Activated naive CD8-positive, alpha-beta T cell treated with anti-CD3 and anti-CD28 coated beads, Interleukin-2, amount 10 ng/mL, durations not matched to agents 7 days and 5 days (primary cell): ENCODE measurements at regions of chr11 and their contacts with region 1.

Region 1: GRCh38 chr11:128323381-128323780 is 264.0 kb downstream of the ETS1 start:
- DNase-seq: no peak
- ATAC-seq: peak; percentile 17
- H3K4me3 Mint-ChIP-seq: peak overlapping the region; percentile 84
- H3K27ac Mint-ChIP-seq: peak overlapping the region; percentile 98
- H3K4me1 Mint-ChIP-seq: peaks cover 79% of the 10 kb centered on the region
- H3K27me3 Mint-ChIP-seq: no peaks in the 10 kb centered on the region

Region 2: DNA sequence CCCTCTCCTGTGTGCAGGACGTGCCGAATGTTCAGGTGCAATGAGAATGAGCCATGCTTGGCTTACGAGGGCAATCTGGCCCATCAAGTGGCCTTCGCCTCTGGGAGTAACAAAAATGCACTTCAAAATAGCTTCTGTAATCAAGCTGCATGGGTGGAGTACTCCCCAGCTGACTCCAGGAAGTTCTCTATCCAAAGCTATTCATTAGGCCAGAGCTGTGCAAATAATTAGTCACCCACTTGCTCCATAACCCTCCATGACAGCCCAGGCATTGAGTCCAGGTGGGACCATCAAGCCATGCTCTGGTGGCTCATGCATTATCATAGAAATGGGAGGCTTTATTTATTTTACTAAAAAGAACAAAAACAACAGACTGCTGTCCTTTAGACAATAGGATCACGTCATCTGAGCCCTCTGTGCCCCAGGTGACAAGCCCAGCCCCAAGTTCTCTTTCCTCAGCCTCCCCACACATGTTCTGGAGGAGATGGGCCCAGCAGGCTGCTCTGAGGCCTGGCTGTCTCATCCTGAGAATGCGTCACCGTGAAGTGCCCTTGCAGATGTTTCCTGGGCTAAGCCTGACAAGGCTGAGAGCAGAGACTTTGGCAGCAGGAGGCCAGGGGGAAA is 19.2 kb after region 1 on chr11:
- POLR2A ChIA-PET with region 1: interaction called, 18 read pairs
- DNase-seq: peak; percentile 44
- ATAC-seq: peak; percentile 48
- H3K4me3 Mint-ChIP-seq: peak overlapping the region; percentile 87
- H3K27ac Mint-ChIP-seq: peak overlapping the region; percentile 97
- H3K4me1 Mint-ChIP-seq: peaks cover 43% of the 10 kb centered on the region
- H3K27me3 Mint-ChIP-seq: no peaks in the 10 kb centered on the region

Region 3: DNA sequence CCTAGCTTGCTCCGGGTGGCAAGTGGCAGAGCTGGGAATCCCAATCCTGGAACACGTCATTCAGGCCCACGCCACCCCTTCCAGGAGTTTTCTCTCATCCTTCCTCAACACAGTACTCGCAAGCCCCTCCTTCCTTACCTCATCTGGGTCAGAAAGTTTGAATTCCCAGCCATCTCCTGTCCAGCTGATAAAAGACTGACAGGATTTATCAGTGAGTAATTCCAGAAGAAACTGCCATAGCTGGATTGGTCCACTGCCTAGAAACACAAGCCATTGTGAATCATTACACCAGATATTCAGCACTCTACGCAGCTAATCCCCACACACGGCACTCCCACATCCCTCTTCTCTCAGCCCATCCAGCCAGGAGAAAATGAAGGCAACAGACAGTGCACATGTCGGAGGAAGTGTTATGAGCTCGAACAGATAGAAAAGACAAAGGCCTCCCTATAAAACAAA is 140.0 kb after region 1 on chr11:
- POLR2A ChIA-PET with region 1: interaction called, 18 read pairs
- DNase-seq: no peak
- ATAC-seq: no peak
- H3K4me3 Mint-ChIP-seq: peak overlapping the region; percentile 76
- H3K27ac Mint-ChIP-seq: peak overlapping the region; percentile 88
- H3K4me1 Mint-ChIP-seq: peaks cover 74% of the 10 kb centered on the region
- H3K27me3 Mint-ChIP-seq: no peaks in the 10 kb centered on the region

Region 4: DNA sequence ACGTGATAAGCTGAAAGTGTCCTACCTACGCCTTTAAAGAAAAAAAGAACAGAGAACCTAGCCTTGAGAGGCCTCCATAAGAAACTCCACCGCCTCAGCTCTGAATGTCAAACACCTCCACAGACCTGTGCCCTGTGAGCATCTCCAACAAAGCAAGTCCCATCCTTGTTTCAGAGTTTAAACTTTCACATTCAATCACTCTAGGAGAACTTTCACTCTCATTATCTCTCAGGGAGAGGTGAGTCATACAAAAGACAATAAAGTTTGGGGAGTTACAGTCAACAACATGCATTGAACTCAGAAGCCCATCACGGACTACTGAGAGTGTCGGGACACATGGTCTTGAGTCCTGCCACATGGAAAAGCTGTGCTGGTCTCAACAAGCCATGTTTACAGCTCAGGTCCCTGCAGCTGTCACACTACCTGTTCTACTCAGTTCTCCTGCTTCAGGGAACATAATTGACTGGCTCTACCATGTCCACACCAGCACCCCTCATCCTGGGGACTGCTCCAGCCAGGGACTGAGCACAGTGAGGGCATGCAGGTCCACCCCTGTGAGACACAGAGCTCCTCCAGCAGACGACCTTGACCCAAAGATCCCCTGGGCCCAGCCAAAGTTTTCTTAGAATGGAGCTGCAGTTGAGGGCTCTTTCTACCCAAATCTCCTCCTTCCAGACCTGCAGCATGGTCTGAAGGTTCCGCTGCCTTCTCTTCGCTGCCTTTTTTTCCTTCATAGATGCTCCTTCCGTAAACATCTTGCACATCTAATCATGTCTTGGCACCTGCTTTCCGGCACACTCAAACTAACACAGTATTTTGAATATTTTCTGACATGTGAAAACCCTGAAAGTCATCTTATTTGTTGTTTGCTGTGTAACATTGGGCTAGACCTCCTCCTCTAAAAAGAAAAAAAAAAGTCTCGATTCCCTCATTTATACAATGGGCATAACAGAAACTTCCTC is 149.0 kb after region 1 on chr11:
- POLR2A ChIA-PET with region 1: interaction called, 16 read pairs
- DNase-seq: no peak
- ATAC-seq: peak; percentile 49
- H3K4me3 Mint-ChIP-seq: peak overlapping the region; percentile 74
- H3K27ac Mint-ChIP-seq: peak overlapping the region; percentile 97
- H3K4me1 Mint-ChIP-seq: peaks cover 88% of the 10 kb centered on the region
- H3K27me3 Mint-ChIP-seq: no peaks in the 10 kb centered on the region

Region 5: DNA sequence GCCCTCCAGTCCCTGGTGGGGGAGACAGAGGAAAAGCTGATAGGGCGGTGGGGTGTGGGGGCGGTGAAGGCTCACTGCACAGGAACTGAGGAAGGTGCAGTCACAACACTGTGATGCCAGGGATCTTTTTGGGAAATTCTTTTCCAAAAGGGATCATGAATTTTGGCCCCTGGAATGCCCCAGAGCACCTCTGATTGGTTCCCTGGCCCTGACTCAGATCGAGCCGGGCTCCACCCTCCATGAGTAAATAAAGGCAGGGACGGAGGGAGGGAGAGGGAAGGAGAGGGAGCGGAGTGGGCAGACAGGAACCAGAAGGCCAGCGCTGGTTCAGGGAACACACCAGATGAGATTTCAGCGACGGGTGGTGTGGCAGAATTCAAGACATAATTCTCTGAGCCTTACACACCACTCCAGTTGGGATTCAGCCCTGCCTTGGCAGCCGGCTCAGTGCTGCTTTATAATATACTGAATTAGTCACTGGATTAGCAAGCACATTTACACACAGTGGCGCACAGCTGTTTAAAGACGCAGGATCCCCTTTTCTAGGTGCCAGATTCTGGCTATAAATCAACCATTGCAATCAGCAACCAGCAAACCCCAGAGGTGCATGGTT is 183.7 kb after region 1 on chr11:
- POLR2A ChIA-PET with region 1: interaction called, 12 read pairs
- DNase-seq: no peak
- ATAC-seq: peak; percentile 3
- H3K4me3 Mint-ChIP-seq: peak overlapping the region; percentile 98
- H3K27ac Mint-ChIP-seq: peak overlapping the region; percentile 89
- H3K4me1 Mint-ChIP-seq: peaks cover 87% of the 10 kb centered on the region
- H3K27me3 Mint-ChIP-seq: no peaks in the 10 kb centered on the region